Right ventricle myocardium inferior (tissue), 1 donor: ENCODE measurements at regions of chr9 and their contacts with region 1.

Region 1: GRCh38 chr9:125631391-125632085 is 75.5 kb downstream of the MAPKAP1 start:
- DNase-seq: no peak
- ATAC-seq: peak; percentile 65

Region 2: DNA sequence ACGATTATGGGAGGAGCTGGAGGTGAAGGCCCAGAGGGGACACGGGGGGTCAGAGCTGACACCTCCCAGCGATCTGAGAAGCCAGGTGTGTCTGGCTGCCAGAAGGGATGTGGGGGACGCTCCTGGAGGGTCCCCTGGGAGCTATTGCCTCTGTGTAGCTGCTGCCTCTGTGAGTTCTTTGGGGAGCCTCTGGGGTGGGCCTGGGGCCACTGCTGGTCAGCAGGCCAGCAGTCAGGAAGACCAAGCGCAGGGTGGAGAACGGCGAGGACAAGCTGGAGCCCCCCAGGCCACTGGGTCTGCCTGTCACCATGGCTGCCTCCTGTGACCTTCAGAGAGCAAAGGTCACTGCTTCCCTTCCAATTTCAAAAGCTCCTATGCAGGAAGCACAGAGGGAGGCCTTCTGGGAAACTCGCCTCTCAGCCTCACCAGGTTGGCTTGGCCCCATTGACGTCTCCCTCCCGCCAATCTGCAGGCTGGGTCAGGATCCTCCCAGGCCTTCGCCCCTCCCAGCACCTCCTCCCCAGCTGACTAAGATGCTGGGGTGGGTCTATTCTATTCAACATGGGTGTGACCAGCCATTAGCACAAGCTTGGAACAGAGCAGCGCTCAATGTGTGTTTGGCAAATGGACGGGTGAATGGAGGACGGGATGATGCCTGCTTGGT is 243.5 kb before region 1 on chr9:
- intact Hi-C with region 1: no loop called
- DNase-seq: no peak
- ATAC-seq: no peak

Region 3: DNA sequence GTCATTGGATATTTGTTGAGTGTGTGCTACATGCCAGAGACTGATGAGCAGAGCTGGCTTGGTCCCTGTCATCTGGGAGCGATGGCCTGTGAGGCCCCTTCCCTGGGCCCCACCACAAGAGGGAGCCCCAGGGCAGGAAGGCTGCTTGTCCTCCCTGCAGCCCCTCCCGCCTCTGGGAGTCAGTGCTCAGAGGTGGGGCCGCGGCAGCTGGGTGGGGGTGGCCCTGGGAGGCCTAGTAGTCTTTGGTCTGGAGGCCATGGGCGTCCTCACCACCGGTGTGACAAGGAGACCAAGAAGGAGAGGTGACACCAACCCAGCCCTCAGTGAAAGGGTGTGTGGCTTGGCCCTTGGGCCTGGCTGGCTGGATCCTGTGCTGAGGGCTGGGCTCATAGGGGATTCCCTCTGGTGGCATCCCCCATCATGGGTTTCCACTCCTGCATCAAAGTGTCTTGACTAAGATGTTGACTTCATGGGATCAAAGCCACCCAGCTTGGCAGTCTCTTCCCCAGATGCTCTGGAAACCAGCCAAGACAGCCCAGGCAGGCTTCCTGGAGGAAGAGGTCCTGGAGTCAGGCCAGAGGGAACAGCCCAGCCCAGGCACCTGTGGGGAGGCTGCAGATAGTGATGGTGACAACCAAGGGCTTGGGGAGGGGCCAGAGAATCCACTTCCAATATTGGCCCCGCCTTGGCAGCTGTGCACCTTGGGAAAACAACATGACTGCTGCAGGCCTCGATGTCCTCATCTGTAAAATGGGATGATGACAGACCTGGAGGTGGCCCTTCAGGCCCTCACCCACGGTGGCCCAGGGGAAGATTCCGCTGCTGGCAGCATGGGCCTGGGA is 203.3 kb before region 1 on chr9:
- intact Hi-C with region 1: loop called (anchors 5 kb)
- DNase-seq: no peak
- ATAC-seq: peak; percentile 38

Region 4: GRCh38 chr9:125558453-125559092 is 73.0 kb before region 1 on chr9:
- intact Hi-C with region 1: loop called (anchors 5 kb)
- DNase-seq: no peak
- ATAC-seq: peak; percentile 74